Sigmoid colon (tissue), 7 donors: ENCODE measurements at regions of chr10 and their contacts with region 1.

Region 1: GRCh38 chr10:89251409-89252224 is at the start of gene LIPA:
- DNase-seq: peak; percentile 98
- H3K4me3 ChIP-seq: peak within 1 kb of the TSS; percentile 87 to 99 (median 92)
- H3K27ac ChIP-seq: peak within 1 kb of the TSS; percentile 80 to 94 (median 86)
- H3K4me1 ChIP-seq: peaks cover 0 to 11% (median 8%) of the 10 kb centered on the region in 4 donors
- H3K27me3 ChIP-seq: no peaks in the 10 kb centered on the region
- CTCF ChIP-seq: no peak
- EP300 ChIP-seq: no peak
- POLR2A ChIP-seq: no peak
- total RNA-seq, gene LIPA: 23.1 to 35.7 (median 31.4) TPM

Region 2: DNA sequence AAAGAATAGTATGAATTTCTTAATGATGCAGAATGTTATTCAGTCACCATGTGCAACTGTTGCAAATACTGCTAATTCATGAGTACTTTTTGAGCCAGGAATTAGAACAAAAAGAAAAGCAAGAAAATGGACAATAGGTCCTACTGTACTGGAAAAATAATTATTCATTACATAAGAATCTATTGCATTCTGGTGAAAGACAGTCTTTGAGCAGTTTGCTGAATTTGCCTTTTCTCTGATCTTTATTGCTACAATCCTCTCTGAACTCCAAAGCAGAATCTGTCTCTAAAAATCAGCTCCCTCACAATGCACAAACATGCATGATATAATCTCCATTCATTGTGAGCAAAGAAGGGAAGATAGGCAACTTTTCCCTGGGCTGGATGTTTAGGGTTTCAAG is 63.1 kb after region 1 on chr10:
- intact Hi-C with region 1: no loop called
- DNase-seq: no peak
- H3K4me3 ChIP-seq: no peak overlapping the region
- H3K27ac ChIP-seq: no peak overlapping the region
- H3K4me1 ChIP-seq: no peaks in the 10 kb centered on the region
- H3K27me3 ChIP-seq: no peaks in the 10 kb centered on the region
- CTCF ChIP-seq: no peak
- EP300 ChIP-seq: no peak
- POLR2A ChIP-seq: no peak

Region 3: GRCh38 chr10:89414146-89414878 is 162.7 kb after region 1 on chr10 and contains the start of gene IFIT5:
- intact Hi-C with region 1: loop called (anchors 5 kb)
- DNase-seq: peak; percentile 88
- H3K4me3 ChIP-seq: peak within 1 kb of the TSS; percentile 73 to 89 (median 80)
- H3K27ac ChIP-seq: peak within 1 kb of the TSS; percentile 87 to 96 (median 94)
- H3K4me1 ChIP-seq: peaks cover 0 to 41% (median 30%) of the 10 kb centered on the region in 4 donors
- H3K27me3 ChIP-seq: no peaks in the 10 kb centered on the region
- CTCF ChIP-seq: no peak
- EP300 ChIP-seq: no peak
- POLR2A ChIP-seq: peak; percentile 12 to 29
- total RNA-seq, gene IFIT5: 10.2 to 24.3 (median 19.3) TPM

Region 4: GRCh38 chr10:89481662-89482061 is 230.0 kb after region 1 on chr10:
- intact Hi-C with region 1: no loop called
- DNase-seq: no peak
- H3K4me3 ChIP-seq: no peak overlapping the region
- H3K27ac ChIP-seq: peak overlapping the region; percentile 65 to 82 (median 78)
- H3K4me1 ChIP-seq: peaks cover 0 to 58% (median 53%) of the 10 kb centered on the region in 4 donors
- H3K27me3 ChIP-seq: no peaks in the 10 kb centered on the region
- CTCF ChIP-seq: no peak
- EP300 ChIP-seq: peak; percentile 33 to 97 (median 89)
- POLR2A ChIP-seq: no peak

Region 5: DNA sequence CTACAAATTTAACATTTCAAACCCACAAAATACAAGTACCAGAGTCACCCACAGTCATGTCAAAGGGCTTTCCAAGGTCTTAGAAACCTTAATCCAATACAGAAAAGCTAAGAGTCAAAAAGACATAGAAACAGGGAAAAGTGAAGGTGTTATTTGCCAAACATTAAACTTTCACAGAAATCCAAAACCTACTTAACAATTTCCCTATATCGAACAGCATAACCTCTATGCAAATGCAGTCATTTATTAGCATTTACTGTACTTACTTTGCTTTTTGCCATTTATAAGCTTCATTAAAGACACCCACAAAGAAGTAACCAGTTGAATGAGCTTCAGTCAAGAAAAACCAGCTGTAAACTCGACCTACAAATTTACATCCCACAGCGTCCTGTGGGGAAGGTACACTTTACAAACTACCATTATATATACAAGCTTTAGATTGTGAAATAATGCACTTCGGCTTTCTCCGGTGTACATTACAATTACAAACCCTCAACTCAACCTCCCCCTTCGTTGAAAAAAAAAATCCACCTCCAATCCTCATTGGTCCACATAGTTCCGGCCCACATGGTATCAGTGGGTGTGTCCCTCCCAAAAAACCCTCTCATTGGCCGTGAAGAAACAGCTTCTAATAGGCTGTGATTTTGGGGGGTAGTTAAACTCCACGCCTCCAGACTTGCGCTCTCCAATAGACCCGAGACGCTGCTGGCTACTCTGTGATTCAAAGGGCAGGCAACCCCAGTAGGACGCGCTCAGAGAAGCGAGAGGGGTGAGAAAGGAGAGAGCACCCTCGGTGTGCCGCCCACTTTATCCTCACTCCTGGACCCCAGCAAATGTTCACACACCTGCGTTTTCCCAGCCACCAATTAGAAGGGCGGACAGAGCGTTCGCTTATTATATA is 392.1 kb after region 1 on chr10:
- intact Hi-C with region 1: loop called (anchors 10 kb)
- DNase-seq: peak; percentile 85
- H3K4me3 ChIP-seq: peak overlapping the region; percentile 52 to 95 (median 78)
- H3K27ac ChIP-seq: peak overlapping the region; percentile 85 to 96 (median 88)
- H3K4me1 ChIP-seq: peaks cover 0 to 17% (median 13%) of the 10 kb centered on the region in 4 donors
- H3K27me3 ChIP-seq: no peaks in the 10 kb centered on the region
- CTCF ChIP-seq: no peak
- EP300 ChIP-seq: no peak
- POLR2A ChIP-seq: peak; percentile 79 to 90

Region 6: GRCh38 chr10:89701238-89702120 is 449.9 kb after region 1 on chr10 and contains the start of gene KIF20B:
- intact Hi-C with region 1: loop called (anchors 10 kb)
- DNase-seq: peak; percentile 96
- H3K4me3 ChIP-seq: peak within 1 kb of the TSS; percentile 56 to 72 (median 70)
- H3K27ac ChIP-seq: peak within 1 kb of the TSS; percentile 83 to 89 (median 86)
- H3K4me1 ChIP-seq: peaks cover 0 to 19% (median 10%) of the 10 kb centered on the region in 4 donors
- H3K27me3 ChIP-seq: no peaks in the 10 kb centered on the region
- CTCF ChIP-seq: peak in 2 of 4 experiments; percentile 25 to 27
- EP300 ChIP-seq: no peak
- POLR2A ChIP-seq: peak; percentile 26 to 31
- total RNA-seq, gene KIF20B: 1.7 to 2.9 (median 2.7) TPM